Vagina (tissue), 2 donors: ENCODE measurements at regions of chr2 and their contacts with region 1.

Region 1: GRCh38 chr2:7427293-7428060 is 510.3 kb downstream of the RNF144A start:
- DNase-seq: no peak
- H3K4me3 ChIP-seq: no peak overlapping the region
- H3K27ac ChIP-seq: no peak overlapping the region
- H3K4me1 ChIP-seq: peaks cover 14% of the 10 kb centered on the region
- H3K27me3 ChIP-seq: no peaks in the 10 kb centered on the region
- CTCF ChIP-seq: peak; percentile 48 to 59 (median 50)
- POLR2A ChIP-seq: no peak

Region 2: DNA sequence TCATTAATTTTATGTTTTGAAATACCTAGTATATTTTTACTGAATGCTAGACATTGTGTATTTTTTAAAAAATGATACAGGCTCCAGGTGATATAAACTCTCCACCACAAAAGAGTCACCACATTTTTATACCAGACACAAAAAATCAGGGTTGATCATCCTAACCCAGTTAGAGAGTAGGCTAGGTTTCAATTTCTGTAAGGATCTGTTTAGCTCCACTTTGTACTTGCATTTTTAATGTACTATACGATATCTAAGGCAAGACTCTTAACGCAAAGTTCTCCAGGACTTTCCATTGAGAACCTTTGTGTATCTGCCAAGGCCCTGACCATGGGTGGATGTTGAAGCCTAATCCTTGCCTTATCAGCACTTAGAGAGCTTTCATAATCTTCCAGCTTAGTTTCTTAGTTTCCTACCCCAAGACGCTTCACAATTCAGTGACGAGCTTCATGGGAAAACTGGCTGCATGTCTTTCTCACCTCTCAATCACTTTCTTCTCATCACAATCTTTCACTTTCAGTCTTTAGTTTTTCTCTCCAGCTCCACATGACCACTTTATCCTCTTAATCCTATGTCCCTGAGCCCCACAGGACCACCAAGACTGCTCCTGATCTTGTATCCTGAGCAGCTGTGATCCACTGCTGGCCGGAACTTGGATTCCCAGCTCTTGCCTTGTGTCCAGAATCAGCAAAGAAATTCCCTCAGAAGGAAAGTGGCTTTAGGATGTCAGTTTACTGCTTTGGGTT is 125.5 kb after region 1 on chr2:
- intact Hi-C with region 1: no loop called
- DNase-seq: no peak
- H3K4me3 ChIP-seq: no peak overlapping the region
- H3K27ac ChIP-seq: no peak overlapping the region
- H3K4me1 ChIP-seq: no peaks in the 10 kb centered on the region
- H3K27me3 ChIP-seq: no peaks in the 10 kb centered on the region
- CTCF ChIP-seq: no peak
- POLR2A ChIP-seq: no peak

Region 3: DNA sequence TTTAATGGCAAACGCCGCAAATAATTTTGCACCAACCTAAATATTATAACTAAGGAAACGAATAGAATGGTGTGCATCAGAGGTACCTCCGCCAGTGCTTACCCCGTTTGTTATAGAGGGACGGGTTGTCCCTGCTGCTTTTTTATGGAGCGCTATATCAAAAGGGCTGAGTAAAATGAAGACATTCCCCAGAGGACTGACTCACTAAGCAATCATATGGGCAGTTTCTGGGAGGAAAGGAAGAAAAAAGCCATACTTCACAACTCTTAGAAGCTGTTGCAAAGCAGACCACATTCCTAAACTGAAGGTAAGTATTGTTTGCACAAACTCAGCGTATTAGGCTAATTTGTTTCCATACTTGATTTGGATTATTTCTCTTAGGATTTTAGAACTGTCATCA is 1267.3 kb after region 1 on chr2:
- intact Hi-C with region 1: loop called (anchors 5 kb)
- DNase-seq: no peak
- H3K4me3 ChIP-seq: no peak overlapping the region
- H3K27ac ChIP-seq: no peak overlapping the region
- H3K4me1 ChIP-seq: peaks cover 6% of the 10 kb centered on the region
- H3K27me3 ChIP-seq: no peaks in the 10 kb centered on the region
- CTCF ChIP-seq: no peak
- POLR2A ChIP-seq: no peak